Right ventricle myocardium superior (tissue), 1 donor: ENCODE measurements at regions of chr7 and their contacts with region 1.

Region 1: GRCh38 chr7:151773756-151774155 is 103.2 kb downstream of the PRKAG2 start:
- DNase-seq: no peak
- ATAC-seq: no peak

Region 2: GRCh38 chr7:151665368-151665767 is 108.4 kb before region 1 on chr7:
- intact Hi-C with region 1: no loop called
- DNase-seq: peak; percentile 87
- ATAC-seq: peak; percentile 75

Region 3: GRCh38 chr7:151936207-151936606 is 162.5 kb after region 1 on chr7:
- intact Hi-C with region 1: loop called (anchors 10 kb)
- DNase-seq: no peak
- ATAC-seq: no peak

Region 4: GRCh38 chr7:153190452-153190851 is 1416.7 kb after region 1 on chr7:
- intact Hi-C with region 1: no loop called
- DNase-seq: no peak
- ATAC-seq: no peak